ENCODE measurements at regions of chr1 and their contacts with region 1.

Region 1: GRCh38 chr1:235328357-235329138 is at the start of gene GGPS1:
- DNase-seq: peak; percentile 97 to 99
- H3K4me3 ChIP-seq: peak within 1 kb of the TSS; percentile 89
- H3K27ac ChIP-seq: peak within 1 kb of the TSS; percentile 79
- H3K4me1 ChIP-seq: peaks cover 47% of the 10 kb centered on the region
- H3K27me3 ChIP-seq: no peaks in the 10 kb centered on the region
- CTCF ChIP-seq: no peak
- total RNA-seq, gene GGPS1: 47.4 and 61.7 TPM in 2 replicates

Region 2: GRCh38 chr1:235160957-235161684 is 167.4 kb before region 1 on chr1 and contains the start of gene RBM34:
- CTCF ChIA-PET with region 1: no interaction called
- POLR2A ChIA-PET with region 1: no interaction called
- intact Hi-C with region 1: loop called (anchors 5 kb)
- DNase-seq: peak; percentile 80 to 95
- H3K4me3 ChIP-seq: peak within 1 kb of the TSS; percentile 73
- H3K27ac ChIP-seq: peak within 1 kb of the TSS; percentile 85
- H3K4me1 ChIP-seq: peaks cover 16% of the 10 kb centered on the region
- H3K27me3 ChIP-seq: no peaks in the 10 kb centered on the region
- CTCF ChIP-seq: no peak
- total RNA-seq, gene RBM34: 101 and 106 TPM in 2 replicates

Region 3: DNA sequence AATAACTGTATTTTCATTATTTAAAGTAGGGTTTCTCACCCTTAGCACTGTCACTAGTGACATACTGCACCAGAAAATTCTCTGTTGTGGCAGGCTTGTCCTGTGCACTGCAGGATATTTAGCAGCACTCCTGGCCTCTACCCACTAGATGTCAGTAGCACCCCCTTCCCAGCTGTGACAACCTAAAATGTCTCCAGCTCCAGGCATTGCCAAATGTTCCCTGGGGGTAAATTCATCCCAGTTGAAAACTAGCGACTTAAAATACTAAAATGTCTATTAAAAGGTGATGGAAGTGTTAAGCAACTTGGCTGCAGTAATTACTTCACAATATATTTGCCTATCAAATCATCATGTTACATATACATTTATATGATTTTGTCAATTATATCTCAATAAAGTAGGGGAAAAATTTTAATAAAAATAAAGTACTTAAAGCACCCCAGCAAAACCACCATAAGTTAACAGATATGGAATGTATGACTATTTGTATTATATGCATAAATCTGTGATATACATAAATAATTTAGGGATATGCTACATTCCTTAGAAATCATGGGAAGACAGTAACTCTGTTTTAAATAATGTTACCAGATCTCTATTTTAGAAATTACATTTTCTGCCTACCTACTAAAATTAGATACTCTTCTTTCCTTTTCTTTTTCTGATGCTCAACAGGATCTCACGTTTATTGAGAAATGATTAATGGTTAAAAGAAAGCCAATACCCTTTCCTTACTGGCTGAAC is 75.2 kb before region 1 on chr1:
- CTCF ChIA-PET with region 1: interaction called, 5 read pairs
- POLR2A ChIA-PET with region 1: no interaction called
- intact Hi-C with region 1: loop called (anchors 1 kb)
- DNase-seq: peak; percentile 68 to 71
- H3K4me3 ChIP-seq: no peak overlapping the region
- H3K27ac ChIP-seq: 0 out of 2 replicates have a peak overlapping the region, but pooled peaks have one; percentile 25
- H3K4me1 ChIP-seq: peaks cover 8% of the 10 kb centered on the region; the same call in 1 of the 2 replicates
- H3K27me3 ChIP-seq: no peaks in the 10 kb centered on the region
- CTCF ChIP-seq: peak; percentile 88

Region 4: DNA sequence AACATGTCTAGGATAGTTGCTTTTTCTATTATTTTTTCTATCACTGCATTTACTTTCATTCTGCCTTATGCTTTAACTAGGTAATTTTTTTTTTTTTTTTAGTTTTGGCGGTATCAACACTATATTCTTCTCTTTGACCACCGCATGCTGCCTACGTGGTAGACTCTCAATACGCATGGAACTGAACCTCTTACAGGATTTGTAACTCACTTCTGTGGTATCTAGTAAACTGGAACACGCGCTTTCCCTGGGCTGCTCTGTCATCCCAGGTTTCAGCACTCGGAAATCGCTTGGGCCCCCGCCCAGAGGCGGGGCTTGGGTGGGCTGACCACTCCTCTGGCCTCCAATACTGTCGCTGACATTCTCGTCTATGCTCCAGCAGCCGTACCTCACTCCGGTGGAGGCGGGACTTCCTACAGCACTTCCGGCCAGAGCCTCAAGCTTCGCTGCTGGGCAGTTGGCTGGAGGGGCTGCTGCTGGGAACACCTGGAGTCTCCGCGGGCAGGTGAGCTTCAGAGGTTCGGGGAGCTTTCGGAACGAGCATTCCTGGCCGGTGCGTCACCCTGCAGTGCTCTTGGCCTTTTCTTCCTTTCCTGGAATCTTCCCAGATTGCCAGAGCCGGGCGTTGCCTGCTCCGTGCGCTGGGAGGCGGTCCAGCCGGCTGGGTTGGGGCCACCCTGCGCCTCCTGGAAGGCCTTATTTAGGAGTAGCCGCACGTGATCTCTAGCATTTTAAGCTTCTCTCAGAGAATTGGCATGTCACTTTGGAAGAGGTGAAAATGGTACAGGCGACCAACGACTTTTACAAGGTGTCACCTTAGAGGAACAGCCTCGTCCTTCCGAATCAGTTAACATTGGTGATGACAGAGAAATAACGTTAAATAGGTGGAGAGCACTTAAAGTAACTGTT is 38.7 kb after region 1 on chr1 and contains the start of gene TBCE:
- CTCF ChIA-PET with region 1: no interaction called
- POLR2A ChIA-PET with region 1: interaction called, 5 read pairs
- intact Hi-C with region 1: loop called (anchors 1 kb)
- DNase-seq: peak; percentile 98 to 99
- H3K4me3 ChIP-seq: peak within 1 kb of the TSS; percentile 82
- H3K27ac ChIP-seq: peak within 1 kb of the TSS; percentile 84
- H3K4me1 ChIP-seq: peaks cover 22% of the 10 kb centered on the region
- H3K27me3 ChIP-seq: no peaks in the 10 kb centered on the region
- CTCF ChIP-seq: no peak; the same call in 1 of the 2 replicates
- total RNA-seq, gene TBCE: 18.9 and 22.8 TPM in 2 replicates

Region 5: GRCh38 chr1:235473806-235474205 is 145.3 kb after region 1 on chr1:
- CTCF ChIA-PET with region 1: no interaction called
- POLR2A ChIA-PET with region 1: interaction called, 16 read pairs
- intact Hi-C with region 1: no loop called
- DNase-seq: no peak
- H3K4me3 ChIP-seq: no peak overlapping the region
- H3K27ac ChIP-seq: no peak overlapping the region
- H3K4me1 ChIP-seq: peaks cover 11% of the 10 kb centered on the region
- H3K27me3 ChIP-seq: no peaks in the 10 kb centered on the region
- CTCF ChIP-seq: no peak

Region 6: GRCh38 chr1:235557495-235557894 is 228.9 kb after region 1 on chr1:
- CTCF ChIA-PET with region 1: no interaction called
- POLR2A ChIA-PET with region 1: no interaction called
- intact Hi-C with region 1: no loop called
- DNase-seq: no peak
- H3K4me3 ChIP-seq: no peak overlapping the region
- H3K27ac ChIP-seq: no peak overlapping the region
- H3K4me1 ChIP-seq: no peaks in the 10 kb centered on the region
- H3K27me3 ChIP-seq: no peaks in the 10 kb centered on the region
- CTCF ChIP-seq: 0 out of 2 replicates have a peak, but pooled peaks have one; percentile 17

Measured in PC-9 (cell line).